ENCODE measurements at regions of chr6 and their contacts with region 1.

Region 1: GRCh38 chr6:71393981-71394432 is 105.4 kb downstream of the OGFRL1 start:
- DNase-seq: no peak
- ATAC-seq: peak; percentile 69

Region 2: GRCh38 chr6:71482742-71483141 is 88.7 kb after region 1 on chr6:
- intact Hi-C with region 1: loop called (anchors 5 kb)
- DNase-seq: no peak
- ATAC-seq: no peak